GM10248 (cell line): ENCODE measurements at regions of chr11 and their contacts with region 1.

Region 1: DNA sequence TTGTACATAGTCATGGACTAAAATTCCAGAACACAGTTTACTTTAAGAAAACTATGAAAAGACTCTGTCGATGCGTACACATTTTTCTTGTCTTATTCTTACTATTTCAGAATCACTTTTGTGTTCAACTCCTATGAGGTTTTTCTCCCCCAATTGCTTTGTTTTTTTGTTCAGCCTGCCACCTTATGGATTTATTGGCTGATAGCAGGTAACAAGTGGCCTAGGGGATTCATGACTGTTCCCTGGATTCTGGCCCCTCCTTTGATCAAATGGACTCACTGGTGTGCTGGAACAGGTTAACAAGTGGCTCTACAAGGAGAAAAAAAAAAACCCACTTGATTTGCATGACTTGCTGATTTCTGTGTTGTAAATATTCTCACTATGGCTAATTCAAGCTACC is 10.6 kb downstream of the MMP20 start:
- DNase-seq: no peak
- CTCF ChIP-seq: peak; percentile 37

Region 2: GRCh38 chr11:102317099-102317767 is 297.3 kb before region 1 on chr11 and contains the start of gene BIRC3:
- CTCF ChIA-PET with region 1: interaction called, 20 read pairs
- POLR2A ChIA-PET with region 1: no interaction called
- DNase-seq: peak; percentile 84
- CTCF ChIP-seq: peak; percentile 8

Region 3: DNA sequence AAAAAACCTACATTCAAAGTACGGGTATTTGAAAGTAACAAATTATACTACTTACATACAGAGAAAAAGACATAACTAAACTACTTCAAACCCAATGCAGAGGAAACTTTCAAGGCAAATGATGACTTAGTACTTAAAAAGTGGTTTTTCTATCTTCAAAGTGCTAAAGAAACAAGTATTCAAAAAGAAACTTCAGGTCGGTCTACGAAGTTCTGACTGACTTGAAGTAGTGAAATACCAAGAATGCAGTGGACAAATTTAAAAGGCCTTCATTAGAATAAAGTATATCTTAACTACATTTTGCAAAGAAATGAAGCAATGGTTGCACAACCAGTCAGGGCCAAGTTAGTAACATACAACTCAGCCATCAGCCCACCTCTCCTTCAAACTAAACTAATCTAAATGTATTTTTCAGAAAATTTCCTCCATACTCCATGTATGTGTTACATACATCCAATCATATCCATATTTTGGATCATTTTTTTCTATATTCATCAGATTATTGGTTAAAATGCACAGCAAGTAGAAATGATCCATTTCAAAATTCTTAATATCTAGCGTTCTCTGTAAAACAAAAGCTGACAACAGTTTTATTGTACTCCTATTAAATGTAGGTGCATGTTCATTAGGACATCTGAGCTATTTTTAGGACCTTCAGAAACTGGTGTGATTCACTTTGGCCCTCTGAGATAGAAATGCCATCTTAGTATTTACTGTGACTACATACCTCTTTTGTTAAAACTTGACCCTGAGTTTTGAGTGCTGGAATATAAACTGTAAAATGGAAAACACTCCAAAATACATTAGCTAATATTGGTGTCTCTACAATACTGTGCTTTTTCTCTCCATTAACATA is 217.5 kb before region 1 on chr11:
- CTCF ChIA-PET with region 1: interaction called, 93 read pairs
- POLR2A ChIA-PET with region 1: interaction called, 3 read pairs
- DNase-seq: peak; percentile 18
- CTCF ChIP-seq: no peak

Region 4: DNA sequence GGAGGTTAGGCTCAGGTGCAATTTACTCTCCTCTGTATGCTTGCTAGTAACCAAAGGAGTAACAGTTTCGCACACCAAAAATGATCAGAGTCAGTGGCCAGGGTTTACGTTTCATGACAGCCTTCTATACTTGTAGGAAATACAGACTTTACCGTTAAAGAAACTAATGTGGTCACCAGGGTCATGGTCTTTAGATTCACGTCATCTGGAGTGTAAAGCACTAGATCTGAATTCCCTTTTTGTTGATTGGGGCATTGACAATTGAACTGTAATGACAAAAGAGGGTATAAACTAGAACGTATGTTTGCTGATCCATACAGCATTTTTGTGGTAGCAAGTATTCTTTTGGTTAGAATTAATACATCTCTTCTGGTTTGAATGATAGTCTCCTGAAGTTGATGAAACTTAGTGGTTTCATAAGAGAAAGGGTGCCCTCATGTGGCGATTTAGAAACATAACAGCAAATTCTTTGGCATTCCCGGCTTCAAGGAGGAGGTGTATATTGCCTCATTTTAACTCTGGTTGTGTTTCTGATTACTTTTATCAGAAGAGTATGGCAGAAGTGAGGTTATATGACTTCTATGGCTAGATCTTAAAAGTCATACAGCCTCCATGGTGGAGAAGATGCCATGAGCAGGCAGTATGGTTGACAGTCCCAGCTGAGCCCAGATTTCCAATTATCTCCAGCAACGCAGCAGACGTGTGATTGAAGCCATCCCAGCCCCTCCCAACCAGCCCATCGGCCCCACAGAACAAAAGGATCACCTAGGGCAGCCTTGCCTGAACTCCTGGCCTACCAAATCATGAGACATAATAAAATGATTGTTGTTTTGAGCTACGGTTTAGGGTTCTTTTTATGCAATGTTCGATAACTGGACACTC is 119.1 kb before region 1 on chr11:
- CTCF ChIA-PET with region 1: interaction called, 32 read pairs
- POLR2A ChIA-PET with region 1: no interaction called
- DNase-seq: peak; percentile 58
- CTCF ChIP-seq: peak; percentile 68

Region 5: DNA sequence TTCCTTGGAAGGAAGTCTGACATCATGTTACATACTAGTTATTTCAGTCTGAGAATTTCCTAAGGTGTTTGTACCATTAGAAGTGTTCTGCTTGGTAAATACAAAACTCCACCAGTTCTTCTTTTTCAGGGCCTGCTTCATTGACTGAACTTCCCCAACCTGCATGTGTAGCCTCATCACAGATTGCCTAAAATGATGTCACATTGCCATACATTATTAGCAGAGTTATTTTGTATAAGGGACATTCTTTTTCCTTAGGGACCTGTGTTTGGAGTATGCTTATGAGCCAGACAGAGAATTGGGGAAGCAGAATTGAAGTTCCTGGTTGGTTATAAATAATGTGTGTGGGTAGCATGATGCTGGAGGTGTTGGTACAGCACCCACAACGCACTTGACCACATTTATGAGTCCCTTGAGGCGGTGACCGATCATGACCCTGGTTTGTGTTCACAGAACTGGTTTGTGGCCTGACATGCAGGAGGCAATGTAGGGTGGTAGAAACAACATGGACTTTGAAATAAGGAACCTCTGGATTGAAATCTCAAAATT is 67.5 kb before region 1 on chr11:
- CTCF ChIA-PET with region 1: interaction called, 65 read pairs
- POLR2A ChIA-PET with region 1: interaction called, 4 read pairs
- DNase-seq: peak; percentile 41
- CTCF ChIP-seq: no peak

Region 6: GRCh38 chr11:102599642-102600261 is 14.7 kb before region 1 on chr11:
- CTCF ChIA-PET with region 1: interaction called, 58 read pairs
- POLR2A ChIA-PET with region 1: interaction called, 5 read pairs
- DNase-seq: peak; percentile 61
- CTCF ChIP-seq: no peak

Region 7: DNA sequence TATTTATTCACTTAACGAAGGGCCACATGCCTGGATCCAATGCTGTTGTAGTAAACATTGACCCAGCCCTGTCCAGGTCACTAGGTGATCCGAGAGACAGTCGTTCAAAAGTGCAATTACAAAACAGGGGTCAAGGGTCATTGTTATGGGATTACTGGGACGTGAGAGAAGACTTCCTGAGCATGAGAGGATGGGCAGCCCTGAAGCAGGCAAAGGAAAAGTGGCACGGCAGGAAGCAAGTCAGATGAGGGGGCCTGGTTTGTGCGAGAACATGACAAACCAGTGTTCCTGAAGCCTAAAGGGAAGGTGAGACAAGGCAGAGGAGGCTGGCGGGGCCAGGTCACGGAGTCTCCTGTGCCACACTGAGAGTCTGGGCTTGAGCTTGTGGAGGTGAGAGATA is 26.5 kb after region 1 on chr11:
- CTCF ChIA-PET with region 1: no interaction called
- POLR2A ChIA-PET with region 1: no interaction called
- DNase-seq: no peak
- CTCF ChIP-seq: no peak